Activated CD8-positive, alpha-beta T cell treated with anti-CD3 and anti-CD28 coated beads for 36 hours (primary cell): ENCODE measurements at regions of chr1 and their contacts with region 1.

Region 1: DNA sequence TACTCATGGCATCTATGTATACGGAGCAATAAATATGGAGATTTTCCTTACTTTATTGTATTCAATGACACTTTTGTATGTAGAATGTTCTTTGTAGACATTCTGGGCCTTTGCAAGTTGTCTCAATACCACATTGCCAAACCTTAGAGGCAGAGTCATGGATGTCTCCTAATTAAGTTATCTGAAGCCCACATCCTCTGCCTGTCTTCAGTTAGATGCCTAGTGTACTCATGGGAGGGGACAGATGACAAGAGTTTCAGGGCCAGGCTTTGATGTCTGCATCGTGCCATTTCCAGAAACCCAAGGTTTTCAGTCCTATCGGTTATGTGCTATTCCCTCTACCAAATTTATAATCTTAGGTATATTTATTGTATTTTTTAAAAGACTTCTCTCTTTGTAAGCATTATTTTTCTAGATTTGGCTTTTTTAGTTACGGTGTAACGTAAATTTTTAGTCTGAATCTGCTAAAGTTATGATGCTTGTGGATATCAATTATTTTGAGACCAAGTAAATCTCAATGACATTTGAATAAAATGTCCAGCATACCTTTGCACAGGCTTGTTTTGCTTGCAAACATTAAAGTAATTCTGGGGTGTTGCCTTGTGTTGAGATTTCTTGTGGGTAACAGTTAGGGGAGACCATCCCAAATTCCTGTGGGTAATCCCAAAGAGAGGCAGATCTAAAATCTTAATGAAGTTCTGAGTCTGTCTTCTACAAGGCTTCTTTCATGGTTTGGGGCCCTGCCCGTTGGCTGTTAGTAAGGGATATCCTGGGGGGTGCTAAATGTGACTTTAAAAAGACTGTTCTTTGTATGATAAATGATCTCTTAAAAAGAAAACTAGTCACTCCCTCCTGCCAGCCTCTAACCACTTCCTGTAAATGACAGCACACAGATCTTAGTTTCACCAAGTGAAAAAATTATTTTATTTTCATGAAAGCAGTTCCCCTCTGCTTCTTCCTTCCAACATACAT is 8.0 kb upstream of the MACF1 start:
- DNase-seq: peak; percentile 84
- ATAC-seq: peak; percentile 48
- H3K4me3 Mint-ChIP-seq: peak overlapping the region; percentile 41
- H3K27ac Mint-ChIP-seq: peak overlapping the region; percentile 89
- H3K4me1 Mint-ChIP-seq: peaks cover 72% of the 10 kb centered on the region
- H3K27me3 Mint-ChIP-seq: no peaks in the 10 kb centered on the region
- CTCF ChIP-seq: no peak

Region 2: GRCh38 chr1:38898653-38899230 is 297.8 kb before region 1 on chr1:
- CTCF ChIA-PET with region 1: no interaction called
- POLR2A ChIA-PET with region 1: no interaction called
- intact Hi-C with region 1: no loop called
- DNase-seq: no peak
- ATAC-seq: no peak
- H3K4me3 Mint-ChIP-seq: no peak overlapping the region
- H3K27ac Mint-ChIP-seq: no peak overlapping the region
- H3K4me1 Mint-ChIP-seq: no peaks in the 10 kb centered on the region
- H3K27me3 Mint-ChIP-seq: no peaks in the 10 kb centered on the region
- CTCF ChIP-seq: no peak

Region 3: DNA sequence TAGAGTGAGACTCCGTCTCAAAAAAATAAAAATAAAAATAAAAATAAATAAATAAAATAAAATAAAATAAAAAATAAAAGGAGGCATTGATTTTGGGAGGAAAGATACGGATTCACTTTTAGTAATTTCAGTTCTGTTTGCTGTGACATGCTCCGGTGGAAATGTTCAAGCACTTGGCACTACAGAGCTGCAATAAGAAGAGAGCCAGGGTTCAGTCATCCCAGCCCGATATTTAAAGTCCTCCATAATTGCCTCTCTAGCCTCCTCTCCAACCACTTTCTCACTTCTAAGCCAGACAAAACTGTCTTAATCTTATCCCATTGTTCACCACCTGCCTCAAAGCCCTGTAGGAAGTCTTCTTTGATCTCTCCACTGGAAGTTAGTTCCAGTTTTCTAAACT is 47.0 kb before region 1 on chr1:
- CTCF ChIA-PET with region 1: no interaction called
- POLR2A ChIA-PET with region 1: no interaction called
- intact Hi-C with region 1: no loop called
- DNase-seq: no peak
- ATAC-seq: no peak
- H3K4me3 Mint-ChIP-seq: no peak overlapping the region
- H3K27ac Mint-ChIP-seq: no peak overlapping the region
- H3K4me1 Mint-ChIP-seq: peaks cover 3% of the 10 kb centered on the region
- H3K27me3 Mint-ChIP-seq: peaks cover 2% of the 10 kb centered on the region
- CTCF ChIP-seq: no peak

Region 4: GRCh38 chr1:39183503-39184353 is 12.8 kb before region 1 on chr1:
- CTCF ChIA-PET with region 1: interaction called, 33 read pairs
- POLR2A ChIA-PET with region 1: interaction called, 19 read pairs
- intact Hi-C with region 1: no loop called
- DNase-seq: peak; percentile 93
- ATAC-seq: peak; percentile 84
- H3K4me3 Mint-ChIP-seq: peak overlapping the region; percentile 32
- H3K27ac Mint-ChIP-seq: peak overlapping the region; percentile 94
- H3K4me1 Mint-ChIP-seq: peaks cover 46% of the 10 kb centered on the region
- H3K27me3 Mint-ChIP-seq: no peaks in the 10 kb centered on the region
- CTCF ChIP-seq: peak; percentile 61

Region 5: DNA sequence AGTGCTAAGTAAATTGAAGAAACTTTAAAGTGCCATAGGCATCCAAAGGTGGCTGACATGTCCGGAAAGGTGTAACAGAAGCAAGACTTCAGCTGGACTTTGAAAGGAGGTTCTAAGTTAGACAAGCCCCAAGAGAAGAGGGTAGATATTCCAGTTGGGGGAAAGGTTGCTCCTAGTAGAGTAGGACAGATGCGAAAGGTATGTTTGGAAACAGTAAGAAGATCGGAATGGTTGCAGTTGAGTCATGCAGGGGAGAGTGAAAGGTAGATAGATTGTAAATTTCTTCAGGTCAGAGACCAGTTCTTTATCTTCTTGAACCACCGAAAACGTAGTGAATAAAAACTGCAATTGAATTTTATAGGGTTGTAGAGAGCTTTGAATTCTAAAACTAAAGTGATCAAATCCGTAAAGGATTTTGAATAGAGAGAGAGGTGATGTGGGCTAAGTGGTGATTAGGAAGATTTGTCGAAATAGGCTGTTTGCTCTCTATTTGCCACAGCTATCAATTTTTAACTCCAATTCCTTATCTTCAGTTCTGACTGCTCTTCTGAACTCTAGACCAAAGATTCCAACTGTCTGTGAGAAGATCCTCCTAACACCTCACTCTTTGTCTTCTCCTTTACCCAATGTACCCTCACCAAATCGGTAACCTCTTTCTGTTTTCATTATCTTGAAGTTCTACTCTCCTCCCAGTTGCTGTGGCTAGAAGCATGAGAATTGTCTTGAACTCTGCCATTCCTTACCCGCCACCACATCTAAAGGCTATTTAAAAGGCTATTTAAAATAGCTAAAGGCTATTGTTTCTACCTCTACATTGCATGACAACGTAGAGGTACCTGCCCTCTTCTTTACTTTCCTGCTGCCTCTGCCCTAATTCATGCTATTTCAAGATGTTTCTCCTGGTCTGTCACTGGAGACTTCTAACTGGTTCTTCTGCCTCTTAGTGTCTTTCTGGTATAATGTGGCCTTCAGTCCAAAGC is 24.7 kb after region 1 on chr1:
- CTCF ChIA-PET with region 1: interaction called, 80 read pairs
- POLR2A ChIA-PET with region 1: interaction called, 32 read pairs
- intact Hi-C with region 1: no loop called
- DNase-seq: no peak
- ATAC-seq: no peak
- H3K4me3 Mint-ChIP-seq: no peak overlapping the region
- H3K27ac Mint-ChIP-seq: no peak overlapping the region
- H3K4me1 Mint-ChIP-seq: peaks cover 63% of the 10 kb centered on the region
- H3K27me3 Mint-ChIP-seq: no peaks in the 10 kb centered on the region
- CTCF ChIP-seq: no peak

Region 6: DNA sequence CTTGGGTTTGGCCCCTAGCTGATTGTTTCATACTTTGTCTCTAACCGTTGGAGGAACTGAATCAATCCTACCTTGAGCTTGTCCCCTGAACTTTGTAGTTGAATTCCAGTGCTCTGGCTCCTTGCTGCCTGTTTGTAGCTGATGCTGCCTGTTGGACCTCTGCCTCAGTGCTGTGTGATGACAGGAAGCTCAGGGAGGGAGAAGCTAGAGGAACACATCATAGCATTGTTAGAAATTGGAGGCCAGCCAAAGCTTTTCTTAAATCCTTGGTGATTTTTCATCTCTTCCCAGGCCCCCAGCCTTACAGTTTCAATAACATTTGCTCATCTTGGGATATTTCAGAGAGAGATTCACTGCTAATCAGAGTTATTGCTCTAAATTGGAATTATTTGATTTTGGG is 41.9 kb after region 1 on chr1:
- CTCF ChIA-PET with region 1: interaction called, 11 read pairs
- POLR2A ChIA-PET with region 1: interaction called, 5 read pairs
- intact Hi-C with region 1: no loop called
- DNase-seq: no peak
- ATAC-seq: no peak
- H3K4me3 Mint-ChIP-seq: no peak overlapping the region
- H3K27ac Mint-ChIP-seq: peak overlapping the region; percentile 26
- H3K4me1 Mint-ChIP-seq: peaks cover 34% of the 10 kb centered on the region
- H3K27me3 Mint-ChIP-seq: no peaks in the 10 kb centered on the region
- CTCF ChIP-seq: no peak

Region 7: GRCh38 chr1:39258146-39258924 is 61.8 kb after region 1 on chr1:
- CTCF ChIA-PET with region 1: interaction called, 371 read pairs
- POLR2A ChIA-PET with region 1: interaction called, 17 read pairs
- intact Hi-C with region 1: loop called (anchors 1 kb)
- DNase-seq: peak; percentile 73
- ATAC-seq: peak; percentile 74
- H3K4me3 Mint-ChIP-seq: no peak overlapping the region
- H3K27ac Mint-ChIP-seq: peak overlapping the region; percentile 76
- H3K4me1 Mint-ChIP-seq: peaks cover 38% of the 10 kb centered on the region
- H3K27me3 Mint-ChIP-seq: no peaks in the 10 kb centered on the region
- CTCF ChIP-seq: peak; percentile 93

Region 8: DNA sequence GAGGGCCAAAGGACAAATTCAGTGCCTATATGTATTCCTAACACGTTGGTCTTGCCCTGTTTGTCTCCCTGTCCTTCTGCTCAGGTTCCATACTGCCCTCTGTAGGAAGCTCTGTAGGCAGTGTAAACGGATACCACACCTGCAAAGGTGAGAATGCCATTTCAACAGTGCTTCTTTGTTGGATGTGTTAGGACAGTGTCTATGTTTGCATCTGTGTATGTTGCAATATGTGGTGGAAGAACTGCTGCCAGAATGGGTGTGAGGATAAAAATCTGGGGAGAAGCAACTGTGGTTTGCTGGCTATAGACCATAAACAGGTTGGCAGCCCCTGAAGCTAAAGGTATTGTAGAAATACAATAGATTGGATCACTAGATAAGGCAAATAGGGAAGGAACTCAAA is 181.8 kb after region 1 on chr1:
- CTCF ChIA-PET with region 1: no interaction called
- POLR2A ChIA-PET with region 1: no interaction called
- intact Hi-C with region 1: no loop called
- DNase-seq: no peak
- ATAC-seq: no peak
- H3K4me3 Mint-ChIP-seq: no peak overlapping the region
- H3K27ac Mint-ChIP-seq: no peak overlapping the region
- H3K4me1 Mint-ChIP-seq: no peaks in the 10 kb centered on the region
- H3K27me3 Mint-ChIP-seq: no peaks in the 10 kb centered on the region
- CTCF ChIP-seq: peak; percentile 19

Region 9: DNA sequence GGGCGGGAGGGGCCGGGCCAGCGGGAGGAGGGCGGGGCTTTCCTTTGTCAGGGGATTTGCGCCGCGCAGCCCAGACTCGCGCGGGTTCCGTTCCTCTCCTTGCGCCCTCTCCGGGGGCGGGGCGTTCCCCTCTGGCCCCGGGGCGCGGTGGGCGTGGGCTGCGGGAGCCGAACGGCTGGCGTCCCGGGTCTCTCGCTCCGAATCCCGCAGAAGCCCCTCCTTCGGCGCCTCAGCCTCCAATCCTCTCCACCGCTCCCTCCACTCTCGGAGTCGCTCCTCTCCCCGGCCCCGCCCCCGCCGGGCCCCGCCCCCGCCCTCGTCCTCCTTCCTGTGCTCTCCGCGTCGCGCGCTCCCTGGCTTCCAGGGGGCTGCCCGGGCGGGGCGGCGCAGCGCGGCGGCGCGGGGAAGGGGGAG is 212.1 kb after region 1 on chr1:
- CTCF ChIA-PET with region 1: interaction called, 6 read pairs
- POLR2A ChIA-PET with region 1: no interaction called
- intact Hi-C with region 1: loop called (anchors 10 kb)
- DNase-seq: peak; percentile 84
- ATAC-seq: peak; percentile 85
- H3K4me3 Mint-ChIP-seq: peak overlapping the region; percentile 80
- H3K27ac Mint-ChIP-seq: no peak overlapping the region
- H3K4me1 Mint-ChIP-seq: peaks cover 67% of the 10 kb centered on the region
- H3K27me3 Mint-ChIP-seq: no peaks in the 10 kb centered on the region
- CTCF ChIP-seq: no peak